Activated T-helper 2 cell treated with anti-CD3 and anti-CD28 coated beads, Interferon-gamma antibody, Interleukin-2, Interleukin-4, amounts not matched to agents 10 μg/mL and 5 μg/mL and 100 μg/mL, durations not matched to agents 14 hours and 24 hours and 36 hours (primary cell): ENCODE measurements at regions of chr2 and their contacts with region 1.

Region 1: DNA sequence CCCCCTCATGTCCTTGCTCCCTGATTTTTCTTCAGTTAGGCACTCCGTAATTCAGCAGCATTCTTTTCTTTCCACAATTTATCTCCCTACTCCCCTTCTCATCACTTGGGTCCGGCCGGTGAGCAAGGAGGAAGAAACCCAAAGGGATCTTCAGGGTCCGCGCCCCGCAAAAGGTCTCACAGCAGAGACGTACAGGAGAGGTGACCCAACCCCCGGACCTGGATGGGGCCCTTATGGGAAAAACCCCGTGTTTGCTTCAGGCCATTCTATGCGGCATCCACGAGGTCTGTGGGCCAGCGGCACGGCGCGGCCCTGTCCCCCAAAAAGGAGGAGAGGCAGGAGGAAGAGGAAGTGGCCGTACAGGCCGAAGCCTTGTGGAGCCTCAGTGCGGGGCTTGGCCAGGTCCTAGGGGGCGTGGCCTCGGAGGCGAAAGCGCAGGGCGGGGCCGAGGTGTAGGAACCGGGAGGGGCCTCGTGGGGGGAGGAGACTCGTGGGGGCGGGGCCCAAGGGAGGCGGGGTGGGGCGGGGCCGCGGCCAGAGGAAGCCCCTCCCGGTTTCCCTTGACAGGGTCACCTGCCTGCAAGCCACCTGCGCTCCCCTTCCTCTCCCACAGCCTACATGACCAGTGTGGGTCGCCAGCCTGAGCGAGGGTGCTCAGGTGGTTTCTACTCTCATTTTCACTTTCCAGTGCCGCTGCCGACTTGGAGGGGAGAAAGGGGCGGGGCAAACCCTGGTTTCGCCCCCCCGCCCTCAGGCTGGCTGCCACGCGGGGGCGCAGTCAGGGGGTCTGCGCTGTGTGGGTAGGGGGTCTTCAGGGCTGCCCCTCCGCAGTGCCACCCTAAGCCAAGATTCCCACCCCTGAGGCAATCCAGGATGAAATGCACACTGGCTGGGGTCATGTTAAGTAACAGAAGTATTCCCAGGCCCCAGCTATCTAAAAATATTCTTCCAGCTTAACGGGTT is 156.4 kb upstream of the XPO1 start:
- DNase-seq: peak; percentile 79
- H3K4me3 Mint-ChIP-seq: peak overlapping the region; percentile 93
- H3K27ac Mint-ChIP-seq: peak overlapping the region; percentile 81
- H3K4me1 Mint-ChIP-seq: peaks cover 12% of the 10 kb centered on the region
- H3K27me3 Mint-ChIP-seq: no peaks in the 10 kb centered on the region

Region 2: DNA sequence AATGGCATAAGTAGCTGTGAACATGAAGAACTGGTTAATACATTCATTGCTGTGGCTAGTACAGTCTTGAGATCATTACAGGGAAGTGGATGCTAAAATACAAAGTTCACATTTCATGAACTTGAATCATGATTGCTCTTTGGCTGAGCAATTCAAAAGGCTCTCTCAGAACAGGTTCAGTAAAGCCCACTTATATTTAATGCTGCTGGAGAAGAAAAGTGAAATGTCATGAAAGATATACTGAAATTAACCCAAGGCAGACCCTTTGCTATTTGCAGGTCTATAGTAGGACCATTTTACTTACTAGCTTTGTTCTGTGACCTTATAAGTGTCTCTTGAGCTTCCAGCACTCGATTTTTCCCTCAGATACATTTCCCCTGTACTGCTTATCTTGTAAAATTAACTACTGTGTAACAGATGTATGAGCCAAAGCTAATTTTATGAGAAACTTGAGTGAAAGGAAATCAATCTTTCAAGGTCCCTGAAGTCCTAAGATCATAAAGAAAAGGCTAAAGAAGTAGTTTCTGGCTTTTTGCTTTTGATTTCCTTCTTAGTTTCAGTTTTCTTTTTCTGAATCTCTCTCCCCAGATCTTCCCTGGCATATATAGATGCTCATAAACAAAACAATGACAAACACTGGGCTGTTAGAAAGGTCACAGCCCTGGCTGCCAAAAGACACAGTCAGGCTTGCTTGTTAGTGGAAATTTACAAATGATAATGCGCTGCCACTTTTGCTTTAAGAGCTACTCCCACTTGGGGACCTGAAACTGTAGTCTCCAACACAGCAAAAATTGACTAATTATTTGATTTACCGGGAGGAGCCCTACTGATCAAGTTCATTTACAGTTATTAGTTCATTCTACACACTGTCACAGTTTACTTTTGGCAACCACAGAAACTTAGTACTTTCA is 23.7 kb before region 1 on chr2:
- intact Hi-C with region 1: loop called (anchors 1 kb)
- DNase-seq: peak; percentile 12
- H3K4me3 Mint-ChIP-seq: peak overlapping the region; percentile 61
- H3K27ac Mint-ChIP-seq: peak overlapping the region; percentile 89
- H3K4me1 Mint-ChIP-seq: peaks cover 19% of the 10 kb centered on the region
- H3K27me3 Mint-ChIP-seq: no peaks in the 10 kb centered on the region

Region 3: GRCh38 chr2:61707969-61708852 is 13.6 kb after region 1 on chr2:
- intact Hi-C with region 1: loop called (anchors 2 kb)
- DNase-seq: no peak
- H3K4me3 Mint-ChIP-seq: no peak overlapping the region
- H3K27ac Mint-ChIP-seq: no peak overlapping the region
- H3K4me1 Mint-ChIP-seq: peaks cover 8% of the 10 kb centered on the region
- H3K27me3 Mint-ChIP-seq: peaks cover 5% of the 10 kb centered on the region

Region 4: GRCh38 chr2:61854474-61855182 is 160.0 kb after region 1 on chr2:
- intact Hi-C with region 1: loop called (anchors 10 kb)
- DNase-seq: peak; percentile 87
- H3K4me3 Mint-ChIP-seq: peak overlapping the region; percentile 89
- H3K27ac Mint-ChIP-seq: peak overlapping the region; percentile 88
- H3K4me1 Mint-ChIP-seq: peaks cover 16% of the 10 kb centered on the region
- H3K27me3 Mint-ChIP-seq: no peaks in the 10 kb centered on the region